ENCODE measurements at regions of chr12 and their contacts with region 1.

Region 1: GRCh38 chr12:26701604-26702215 is 131.3 kb downstream of the ITPR2 start:
- DNase-seq: peak in 1 of 2 experiments; percentile 30
- H3K4me3 ChIP-seq: no peak overlapping the region
- H3K4me3 Mint-ChIP-seq: no peak overlapping the region
- H3K27ac Mint-ChIP-seq: no peak overlapping the region
- H3K4me1 ChIP-seq: peaks cover 23% of the 10 kb centered on the region
- H3K4me1 Mint-ChIP-seq: peaks cover 6% of the 10 kb centered on the region
- H3K27me3 ChIP-seq: no peaks in the 10 kb centered on the region
- H3K27me3 Mint-ChIP-seq: no peaks in the 10 kb centered on the region
- CTCF ChIP-seq: peak; percentile 61 to 71

Region 2: DNA sequence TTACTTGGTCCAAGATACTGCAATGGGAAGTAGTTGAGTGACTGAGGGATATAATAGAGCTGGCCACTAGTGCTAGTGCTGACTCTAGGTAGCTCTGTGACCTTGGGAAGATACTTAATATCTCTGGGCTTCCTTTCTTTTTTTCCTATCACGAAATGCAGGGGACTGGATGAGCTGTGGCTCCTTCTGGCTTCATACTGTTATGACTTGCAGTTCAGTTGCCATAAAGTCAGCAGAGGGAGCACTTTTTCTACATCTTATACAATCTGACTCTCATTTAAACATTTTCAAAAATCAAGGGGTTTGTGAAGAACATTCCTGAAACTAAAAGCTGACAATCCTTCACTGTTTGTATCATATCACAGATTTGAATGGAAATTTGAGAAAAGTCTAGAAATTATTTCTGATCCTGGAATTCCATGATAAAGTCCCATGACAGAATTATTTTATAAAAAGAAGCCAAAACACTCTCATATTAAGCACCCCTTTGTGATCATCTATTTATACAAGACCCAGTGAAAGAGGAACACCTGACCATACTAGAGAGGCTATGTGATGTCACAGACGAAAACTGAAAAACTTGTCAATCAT is 582.2 kb before region 1 on chr12:
- CTCF ChIA-PET with region 1: interaction called, 17 read pairs
- POLR2A ChIA-PET with region 1: no interaction called
- intact Hi-C with region 1: loop called (anchors 1 kb)
- DNase-seq: peak in 1 of 2 experiments; percentile 55
- H3K4me3 ChIP-seq: no peak overlapping the region
- H3K4me3 Mint-ChIP-seq: no peak overlapping the region
- H3K27ac Mint-ChIP-seq: no peak overlapping the region
- H3K4me1 ChIP-seq: peaks cover 25% of the 10 kb centered on the region
- H3K4me1 Mint-ChIP-seq: peaks cover 16% of the 10 kb centered on the region
- H3K27me3 ChIP-seq: peaks cover 11% of the 10 kb centered on the region
- H3K27me3 Mint-ChIP-seq: peaks cover 19% of the 10 kb centered on the region
- CTCF ChIP-seq: peak; percentile 65 to 73

Region 3: GRCh38 chr12:26629864-26630263 is 71.8 kb before region 1 on chr12:
- CTCF ChIA-PET with region 1: interaction called, 7 read pairs
- POLR2A ChIA-PET with region 1: no interaction called
- intact Hi-C with region 1: loop called (anchors 5 kb)
- DNase-seq: no peak
- H3K4me3 ChIP-seq: no peak overlapping the region
- H3K4me3 Mint-ChIP-seq: peak overlapping the region; percentile 14
- H3K27ac Mint-ChIP-seq: peak overlapping the region; percentile 51
- H3K4me1 ChIP-seq: peaks cover 57% of the 10 kb centered on the region
- H3K4me1 Mint-ChIP-seq: peaks cover 55% of the 10 kb centered on the region
- H3K27me3 ChIP-seq: no peaks in the 10 kb centered on the region
- H3K27me3 Mint-ChIP-seq: no peaks in the 10 kb centered on the region
- CTCF ChIP-seq: peak in 1 of 2 experiments; percentile 11

Region 4: DNA sequence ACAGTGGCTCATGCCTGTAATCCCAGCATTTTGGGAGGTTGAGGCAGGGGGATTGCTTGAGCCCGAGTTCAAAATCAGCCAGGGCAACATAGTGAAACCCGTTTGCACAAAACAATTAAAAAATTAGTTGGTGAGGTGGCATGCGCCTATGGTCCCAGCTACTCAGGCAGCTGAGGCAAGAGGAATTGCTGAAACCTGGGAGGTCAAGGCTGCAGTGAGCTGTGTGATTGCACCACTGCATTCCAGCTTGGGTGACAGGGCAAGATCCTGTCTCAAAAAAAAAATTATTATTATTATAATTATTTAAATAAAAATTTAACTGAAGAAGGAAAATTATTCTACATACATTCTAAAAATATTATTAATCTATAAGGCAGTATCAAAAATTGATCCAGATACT is 32.9 kb before region 1 on chr12:
- CTCF ChIA-PET with region 1: no interaction called
- POLR2A ChIA-PET with region 1: no interaction called
- intact Hi-C with region 1: no loop called
- DNase-seq: no peak
- H3K4me3 ChIP-seq: no peak overlapping the region
- H3K4me3 Mint-ChIP-seq: no peak overlapping the region
- H3K27ac Mint-ChIP-seq: no peak overlapping the region
- H3K4me1 ChIP-seq: no peaks in the 10 kb centered on the region
- H3K4me1 Mint-ChIP-seq: peaks cover 18% of the 10 kb centered on the region
- H3K27me3 ChIP-seq: no peaks in the 10 kb centered on the region
- H3K27me3 Mint-ChIP-seq: no peaks in the 10 kb centered on the region
- CTCF ChIP-seq: no peak

Region 5: GRCh38 chr12:26730481-26731350 is 29.0 kb after region 1 on chr12:
- CTCF ChIA-PET with region 1: no interaction called
- POLR2A ChIA-PET with region 1: no interaction called
- intact Hi-C with region 1: no loop called
- DNase-seq: no peak
- H3K4me3 ChIP-seq: no peak overlapping the region
- H3K4me3 Mint-ChIP-seq: no peak overlapping the region
- H3K27ac Mint-ChIP-seq: no peak overlapping the region
- H3K4me1 ChIP-seq: peaks cover 4% of the 10 kb centered on the region; the same call in 1 of the 2 replicates
- H3K4me1 Mint-ChIP-seq: peaks cover 8% of the 10 kb centered on the region
- H3K27me3 ChIP-seq: no peaks in the 10 kb centered on the region
- H3K27me3 Mint-ChIP-seq: no peaks in the 10 kb centered on the region
- CTCF ChIP-seq: no peak

Region 6: GRCh38 chr12:26744697-26745440 is 43.2 kb after region 1 on chr12:
- CTCF ChIA-PET with region 1: no interaction called
- POLR2A ChIA-PET with region 1: no interaction called
- intact Hi-C with region 1: no loop called
- DNase-seq: peak; percentile 52 to 54
- H3K4me3 ChIP-seq: no peak overlapping the region
- H3K4me3 Mint-ChIP-seq: no peak overlapping the region
- H3K27ac Mint-ChIP-seq: no peak overlapping the region
- H3K4me1 ChIP-seq: peaks cover 25% of the 10 kb centered on the region
- H3K4me1 Mint-ChIP-seq: peaks cover 17% of the 10 kb centered on the region
- H3K27me3 ChIP-seq: no peaks in the 10 kb centered on the region
- H3K27me3 Mint-ChIP-seq: no peaks in the 10 kb centered on the region
- CTCF ChIP-seq: no peak

Region 7: GRCh38 chr12:27109334-27110028 is 407.8 kb after region 1 on chr12:
- CTCF ChIA-PET with region 1: no interaction called
- POLR2A ChIA-PET with region 1: no interaction called
- intact Hi-C with region 1: no loop called
- DNase-seq: no peak
- H3K4me3 ChIP-seq: no peak overlapping the region
- H3K4me3 Mint-ChIP-seq: no peak overlapping the region
- H3K27ac Mint-ChIP-seq: no peak overlapping the region
- H3K4me1 ChIP-seq: no peaks in the 10 kb centered on the region
- H3K4me1 Mint-ChIP-seq: no peaks in the 10 kb centered on the region
- H3K27me3 ChIP-seq: no peaks in the 10 kb centered on the region; the same call in 1 of the 2 replicates
- H3K27me3 Mint-ChIP-seq: no peaks in the 10 kb centered on the region
- CTCF ChIP-seq: no peak